ENCODE measurements at regions of chr7 and their contacts with region 1.

Region 1: DNA sequence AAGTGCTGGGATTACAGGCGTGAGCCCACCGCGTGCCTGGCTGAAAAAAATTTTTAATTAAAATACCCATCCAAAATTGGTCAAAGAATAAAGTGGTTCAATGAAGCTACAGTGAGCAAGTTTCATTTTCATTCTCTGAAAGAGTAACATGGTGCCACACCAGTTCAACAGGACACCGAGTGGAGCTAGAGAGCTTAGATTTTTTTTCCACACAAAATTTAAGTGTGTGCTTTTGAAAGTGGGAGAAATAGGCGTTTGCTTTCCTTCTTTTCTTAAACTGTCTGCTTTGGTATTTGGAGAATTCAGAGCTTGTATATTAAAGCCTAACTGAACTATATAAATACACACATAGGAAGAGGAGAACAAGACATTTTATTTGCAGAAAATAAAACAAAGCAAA is 43.4 kb downstream of the BPGM start:
- DNase-seq: no peak

Region 2: DNA sequence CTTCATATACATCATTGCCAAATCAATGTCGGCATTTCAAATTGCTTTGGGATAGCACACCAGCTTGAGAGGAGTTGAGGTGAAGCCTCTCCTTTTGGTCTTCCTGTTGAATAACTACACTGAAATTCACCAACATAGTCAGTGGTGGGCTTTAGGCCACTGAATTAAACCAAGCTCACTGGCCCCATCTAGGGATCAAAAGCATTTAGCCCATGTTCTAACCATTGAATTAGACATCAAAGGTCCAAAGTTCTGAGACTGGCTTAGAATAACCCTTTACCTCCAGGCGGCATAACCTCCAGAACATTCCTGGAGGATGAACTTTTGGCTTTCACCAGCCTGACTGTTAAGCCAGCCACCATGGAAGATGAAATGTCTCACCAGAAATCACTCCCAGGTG is 11.3 kb after region 1 on chr7:
- CTCF ChIA-PET with region 1: interaction called, 15 read pairs
- POLR2A ChIA-PET with region 1: no interaction called
- DNase-seq: peak; percentile 63